Activated CD8-positive, alpha-beta T cell treated with anti-CD3 and anti-CD28 coated beads for 36 hours (primary cell): ENCODE measurements at regions of chr17 and their contacts with region 1.

Region 1: DNA sequence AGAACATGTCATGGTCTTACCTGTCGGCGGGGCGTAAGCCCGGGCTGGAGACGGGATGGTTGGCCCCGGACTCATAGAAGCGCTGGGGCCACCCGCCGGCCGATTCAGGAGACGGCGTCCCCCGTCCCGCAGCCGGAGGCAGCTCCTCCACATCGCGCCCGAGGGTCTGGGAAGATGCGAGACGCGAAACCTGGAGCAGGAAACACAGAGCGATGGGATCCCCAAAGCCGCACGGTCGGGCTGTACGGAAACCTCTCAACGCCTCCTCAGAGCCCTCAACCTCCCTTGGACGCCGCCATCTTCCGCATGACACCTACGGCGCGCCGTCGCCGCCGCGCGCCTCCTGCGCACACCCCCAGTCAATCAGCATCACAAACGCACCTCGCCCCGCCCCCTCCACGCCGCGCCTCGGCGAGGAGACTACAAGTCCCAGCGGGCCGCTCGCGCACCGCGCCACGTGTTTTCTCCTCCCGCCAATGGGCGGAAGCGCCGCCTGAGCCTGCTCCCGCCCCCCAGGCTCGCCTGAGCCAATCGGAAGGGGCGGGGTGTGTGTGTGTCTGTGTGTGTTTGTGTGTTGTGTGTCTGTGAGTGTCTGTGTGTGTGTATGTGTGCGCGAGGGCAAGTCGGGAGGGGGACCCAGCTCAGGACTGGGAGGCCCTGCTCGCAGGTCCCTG is at the starts of genes ATPAF2 and GID4:
- DNase-seq: peak; percentile 100
- ATAC-seq: peak; percentile 93
- H3K4me3 Mint-ChIP-seq: peak within 1 kb of the TSS; percentile 95
- H3K27ac Mint-ChIP-seq: peak within 1 kb of the TSS; percentile 96
- H3K4me1 Mint-ChIP-seq: peaks cover 48% of the 10 kb centered on the region
- H3K27me3 Mint-ChIP-seq: no peaks in the 10 kb centered on the region
- CTCF ChIP-seq: no peak
- total RNA-seq, gene ATPAF2: 28.5 to 29.7 TPM
- total RNA-seq, gene GID4: 8.7 to 9.1 TPM

Region 2: GRCh38 chr17:17694169-17695081 is 344.6 kb before region 1 on chr17:
- CTCF ChIA-PET with region 1: no interaction called
- POLR2A ChIA-PET with region 1: interaction called, 4 read pairs
- intact Hi-C with region 1: loop called (anchors 10 kb)
- DNase-seq: peak; percentile 78
- ATAC-seq: peak; percentile 72
- H3K4me3 Mint-ChIP-seq: peak overlapping the region; percentile 83
- H3K27ac Mint-ChIP-seq: peak overlapping the region; percentile 92
- H3K4me1 Mint-ChIP-seq: peaks cover 79% of the 10 kb centered on the region
- H3K27me3 Mint-ChIP-seq: no peaks in the 10 kb centered on the region
- CTCF ChIP-seq: no peak

Region 3: GRCh38 chr17:17712268-17712924 is 326.6 kb before region 1 on chr17:
- CTCF ChIA-PET with region 1: no interaction called
- POLR2A ChIA-PET with region 1: no interaction called
- intact Hi-C with region 1: no loop called
- DNase-seq: peak; percentile 58
- ATAC-seq: peak; percentile 85
- H3K4me3 Mint-ChIP-seq: no peak overlapping the region
- H3K27ac Mint-ChIP-seq: peak overlapping the region; percentile 73
- H3K4me1 Mint-ChIP-seq: peaks cover 26% of the 10 kb centered on the region
- H3K27me3 Mint-ChIP-seq: no peaks in the 10 kb centered on the region
- CTCF ChIP-seq: no peak

Region 4: GRCh38 chr17:17890773-17891759 is 147.9 kb before region 1 on chr17:
- CTCF ChIA-PET with region 1: interaction called, 18 read pairs
- POLR2A ChIA-PET with region 1: interaction called, 3 read pairs
- intact Hi-C with region 1: loop called (anchors 10 kb)
- DNase-seq: peak; percentile 61
- ATAC-seq: peak; percentile 97
- H3K4me3 Mint-ChIP-seq: no peak overlapping the region
- H3K27ac Mint-ChIP-seq: no peak overlapping the region
- H3K4me1 Mint-ChIP-seq: peaks cover 6% of the 10 kb centered on the region
- H3K27me3 Mint-ChIP-seq: no peaks in the 10 kb centered on the region
- CTCF ChIP-seq: peak; percentile 58

Region 5: GRCh38 chr17:17952691-17953090 is 86.3 kb before region 1 on chr17:
- CTCF ChIA-PET with region 1: no interaction called
- POLR2A ChIA-PET with region 1: no interaction called
- intact Hi-C with region 1: no loop called
- DNase-seq: no peak
- ATAC-seq: no peak
- H3K4me3 Mint-ChIP-seq: no peak overlapping the region
- H3K27ac Mint-ChIP-seq: no peak overlapping the region
- H3K4me1 Mint-ChIP-seq: peaks cover 29% of the 10 kb centered on the region
- H3K27me3 Mint-ChIP-seq: no peaks in the 10 kb centered on the region
- CTCF ChIP-seq: no peak

Region 6: DNA sequence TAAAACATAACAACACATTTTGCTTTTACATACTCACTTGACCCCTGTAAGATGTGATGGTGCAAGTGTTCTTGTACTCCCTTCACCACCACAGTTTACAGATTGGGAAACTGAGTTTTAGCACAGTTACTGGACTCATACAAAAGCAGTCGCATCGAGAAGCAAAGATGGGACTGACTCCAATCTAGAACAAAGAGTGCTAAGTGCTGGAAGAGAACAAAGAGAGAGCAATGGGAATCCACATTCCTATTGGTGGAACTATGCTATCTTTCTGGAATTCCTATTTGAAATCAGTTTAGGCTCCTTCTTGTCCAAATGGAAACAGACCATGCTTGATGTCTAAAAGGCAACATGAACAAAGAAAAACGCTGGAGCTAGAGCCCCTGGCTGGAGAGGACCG is 75.9 kb before region 1 on chr17:
- CTCF ChIA-PET with region 1: no interaction called
- POLR2A ChIA-PET with region 1: no interaction called
- intact Hi-C with region 1: no loop called
- DNase-seq: no peak
- ATAC-seq: no peak
- H3K4me3 Mint-ChIP-seq: no peak overlapping the region
- H3K27ac Mint-ChIP-seq: no peak overlapping the region
- H3K4me1 Mint-ChIP-seq: peaks cover 57% of the 10 kb centered on the region
- H3K27me3 Mint-ChIP-seq: no peaks in the 10 kb centered on the region
- CTCF ChIP-seq: no peak

Region 7: DNA sequence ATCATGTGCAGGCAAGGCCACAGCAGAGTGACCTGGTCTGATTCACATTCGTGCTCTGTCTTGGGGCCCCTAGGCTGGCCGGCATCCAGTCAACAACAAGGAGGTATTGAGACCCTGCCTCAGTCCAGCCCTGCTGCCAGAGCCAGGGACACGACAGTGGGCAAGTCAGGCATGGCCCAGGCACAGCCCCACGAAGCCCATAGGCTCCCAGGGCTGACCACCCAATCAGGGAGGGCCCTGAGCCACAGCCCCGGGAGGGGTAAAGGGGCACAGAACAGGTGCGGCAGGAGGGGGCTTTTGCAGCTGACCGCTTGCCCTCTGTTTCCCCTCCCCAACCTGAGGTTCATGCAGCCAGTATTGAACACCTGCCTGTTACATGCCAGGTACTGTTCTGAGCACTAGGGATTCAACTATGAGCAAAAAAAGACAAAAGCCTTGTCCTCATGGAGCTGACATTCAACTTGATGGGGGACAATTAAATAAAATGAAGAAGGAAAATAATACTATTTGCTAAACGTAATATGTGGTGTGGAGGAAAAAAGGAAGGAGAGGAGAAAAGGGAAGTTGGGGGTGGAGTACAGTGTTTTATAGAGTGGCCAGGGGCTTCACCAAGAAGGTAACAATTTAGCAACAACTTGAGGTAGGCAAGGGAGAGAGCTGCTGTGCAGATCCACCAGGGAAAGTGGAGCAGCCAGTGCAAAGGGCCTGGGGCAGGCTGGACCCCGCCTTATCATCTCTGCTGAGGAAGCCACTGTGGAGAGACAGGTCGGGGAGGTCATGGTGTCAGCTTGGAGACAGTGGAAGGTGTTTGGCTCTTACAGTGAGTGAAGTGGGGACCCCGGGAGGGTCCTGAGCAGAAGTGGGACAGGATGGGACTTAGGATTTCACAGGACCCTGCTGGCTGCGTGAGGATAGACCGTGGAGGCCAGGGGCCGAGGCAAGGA is 60.2 kb before region 1 on chr17:
- CTCF ChIA-PET with region 1: no interaction called
- POLR2A ChIA-PET with region 1: interaction called, 3 read pairs
- intact Hi-C with region 1: loop called (anchors 5 kb)
- DNase-seq: no peak
- ATAC-seq: no peak
- H3K4me3 Mint-ChIP-seq: no peak overlapping the region
- H3K27ac Mint-ChIP-seq: no peak overlapping the region
- H3K4me1 Mint-ChIP-seq: no peaks in the 10 kb centered on the region
- H3K27me3 Mint-ChIP-seq: no peaks in the 10 kb centered on the region
- CTCF ChIP-seq: no peak

Region 8: DNA sequence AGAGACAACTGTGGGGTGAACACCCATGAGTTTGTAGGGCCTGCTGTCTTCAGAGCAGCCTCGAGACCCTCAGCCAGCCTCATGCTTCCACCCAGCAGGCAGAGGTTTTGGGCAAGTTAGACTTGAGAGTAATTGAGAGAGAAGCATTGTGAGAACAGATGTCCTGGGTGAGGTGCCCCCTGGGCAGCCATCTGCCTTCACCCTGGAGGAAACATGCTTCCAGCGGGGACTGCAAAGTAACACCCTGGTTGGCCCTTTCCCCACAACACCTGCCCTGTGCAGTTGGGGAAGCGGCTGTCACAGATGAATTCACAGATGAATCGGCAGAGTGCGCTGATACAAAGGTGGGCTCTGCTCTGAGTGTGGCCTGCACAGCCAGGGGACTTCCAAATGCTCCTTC is 23.4 kb before region 1 on chr17:
- CTCF ChIA-PET with region 1: no interaction called
- POLR2A ChIA-PET with region 1: no interaction called
- intact Hi-C with region 1: no loop called
- DNase-seq: no peak
- ATAC-seq: no peak
- H3K4me3 Mint-ChIP-seq: no peak overlapping the region
- H3K27ac Mint-ChIP-seq: no peak overlapping the region
- H3K4me1 Mint-ChIP-seq: peaks cover 6% of the 10 kb centered on the region
- H3K27me3 Mint-ChIP-seq: no peaks in the 10 kb centered on the region
- CTCF ChIP-seq: no peak